A549 (cell line): ENCODE measurements at regions of chr16 and their contacts with region 1.

Region 1: DNA sequence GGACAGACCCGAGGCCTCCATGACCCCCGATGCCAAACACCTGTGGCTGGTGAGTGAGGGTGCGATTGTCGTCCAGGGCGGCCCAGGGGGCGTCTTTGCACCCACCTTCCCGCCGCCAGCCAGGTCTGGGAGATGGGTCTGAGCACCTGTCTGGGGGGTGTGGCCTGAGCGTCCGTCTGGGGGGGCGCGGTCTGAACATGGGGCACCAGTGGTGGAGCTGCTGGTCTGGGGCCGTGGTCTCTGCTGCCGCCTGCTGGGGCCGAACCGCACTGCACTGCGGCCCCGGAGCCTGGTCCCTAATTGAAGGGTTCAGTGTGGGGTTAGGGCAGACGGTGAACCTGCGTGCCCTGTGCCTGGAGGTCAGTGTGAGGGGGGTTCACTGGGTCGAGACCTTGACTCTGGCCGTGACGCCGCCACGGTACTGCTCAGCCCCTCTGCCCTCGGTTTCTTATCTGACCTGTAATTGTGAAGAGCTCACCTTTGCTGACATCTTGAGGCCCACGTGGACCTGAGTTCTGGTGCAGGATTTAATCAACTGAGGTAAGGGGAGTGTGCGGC is 12.6 kb upstream of the TCF25 start:
- DNase-seq: peak; percentile 58 to 91
- ATAC-seq: peak; percentile 93 to 96
- H3K4me3 ChIP-seq: no peak overlapping the region
- H3K27ac ChIP-seq: no peak overlapping the region
- H3K4me1 ChIP-seq: peaks cover 4% of the 10 kb centered on the region; the same call in 1 of the 3 replicates
- CTCF ChIP-seq: peak; percentile 88
- EP300 ChIP-seq: no peak
- POLR2A ChIP-seq: no peak
- RAD21 ChIP-seq: peak; percentile 93

Region 2: GRCh38 chr16:89560378-89561141 is 300.3 kb before region 1 on chr16 and contains the start of gene RPL13:
- CTCF ChIA-PET with region 1: no interaction called
- POLR2A ChIA-PET with region 1: no interaction called
- DNase-seq: peak; percentile 94 to 96
- ATAC-seq: peak; percentile 79 to 87
- H3K4me3 ChIP-seq: peak within 1 kb of the TSS; percentile 99
- H3K27ac ChIP-seq: peak within 1 kb of the TSS; percentile 96 to 99
- H3K4me1 ChIP-seq: peaks cover 52% of the 10 kb centered on the region
- CTCF ChIP-seq: no peak
- EP300 ChIP-seq: no peak
- POLR2A ChIP-seq: peak; percentile 93
- RAD21 ChIP-seq: no peak
- polyA plus RNA-seq, gene RPL13: 2,291 and 2,911 TPM in 2 replicates

Region 3: GRCh38 chr16:89741342-89742014 is 119.3 kb before region 1 on chr16:
- CTCF ChIA-PET with region 1: interaction called, 26 read pairs
- POLR2A ChIA-PET with region 1: no interaction called
- DNase-seq: no peak
- ATAC-seq: peak; percentile 5 to 10; a peak in 3 of 6 replicates
- H3K4me3 ChIP-seq: no peak overlapping the region
- H3K27ac ChIP-seq: no peak overlapping the region
- H3K4me1 ChIP-seq: no peaks in the 10 kb centered on the region
- CTCF ChIP-seq: no peak
- EP300 ChIP-seq: no peak
- POLR2A ChIP-seq: no peak
- RAD21 ChIP-seq: no peak

Region 4: GRCh38 chr16:89791278-89791995 is 69.4 kb before region 1 on chr16:
- CTCF ChIA-PET with region 1: interaction called, 62 read pairs
- POLR2A ChIA-PET with region 1: no interaction called
- DNase-seq: no peak
- ATAC-seq: no peak
- H3K4me3 ChIP-seq: no peak overlapping the region
- H3K27ac ChIP-seq: no peak overlapping the region
- H3K4me1 ChIP-seq: no peaks in the 10 kb centered on the region
- CTCF ChIP-seq: no peak
- EP300 ChIP-seq: no peak
- POLR2A ChIP-seq: no peak
- RAD21 ChIP-seq: no peak

Region 5: GRCh38 chr16:89822188-89823086 is 38.4 kb before region 1 on chr16:
- CTCF ChIA-PET with region 1: interaction called, 15 read pairs
- POLR2A ChIA-PET with region 1: no interaction called
- DNase-seq: no peak
- ATAC-seq: peak; percentile 45 to 52; a peak in 5 of 6 replicates
- H3K4me3 ChIP-seq: no peak overlapping the region
- H3K27ac ChIP-seq: no peak overlapping the region
- H3K4me1 ChIP-seq: peaks cover 6% of the 10 kb centered on the region
- CTCF ChIP-seq: no peak
- EP300 ChIP-seq: no peak
- POLR2A ChIP-seq: no peak
- RAD21 ChIP-seq: no peak

Region 6: DNA sequence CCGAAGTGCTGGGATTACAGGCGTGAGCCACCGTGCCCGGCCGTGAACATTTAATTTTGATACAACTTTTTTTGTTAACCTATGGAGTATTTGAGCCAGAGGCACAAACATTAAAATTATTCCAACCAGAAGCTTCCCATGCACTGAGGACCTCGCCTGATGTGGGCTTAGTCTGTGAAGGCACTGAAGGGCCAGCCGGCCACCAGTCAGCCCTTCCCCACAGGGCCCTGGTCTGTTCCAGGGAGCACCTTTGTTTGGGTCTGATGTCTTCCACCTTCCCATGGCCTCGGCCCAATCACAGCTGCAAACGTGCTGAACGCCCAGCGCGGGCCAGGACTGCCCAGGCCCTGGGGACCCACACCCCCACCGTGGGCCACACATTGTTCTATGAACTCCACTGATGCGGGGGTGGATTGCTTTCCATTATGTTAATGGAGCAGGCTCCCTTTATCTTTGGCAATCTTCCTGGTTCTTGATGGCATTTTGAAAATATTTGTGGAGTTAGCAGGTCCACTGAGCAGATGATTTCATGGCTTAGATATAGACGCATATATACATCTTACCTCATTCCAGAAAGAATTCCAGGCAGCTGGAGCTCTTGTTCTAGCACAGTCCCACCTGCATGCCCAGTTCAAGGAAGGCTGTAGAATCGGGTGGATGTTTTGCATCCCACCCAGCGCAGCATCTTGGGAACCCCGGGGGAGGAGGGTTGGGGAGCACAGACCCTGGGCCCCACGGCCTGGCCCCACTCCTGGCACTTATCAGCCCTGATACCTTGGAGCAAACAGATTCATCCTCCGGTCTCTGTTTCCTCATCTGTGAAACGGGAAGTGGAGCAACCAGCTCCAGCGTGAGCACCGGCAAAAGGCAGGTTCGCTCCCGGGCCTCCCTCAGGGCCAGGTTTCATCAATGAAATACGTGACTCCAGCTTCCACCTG is 18.1 kb before region 1 on chr16:
- CTCF ChIA-PET with region 1: interaction called, 31 read pairs
- POLR2A ChIA-PET with region 1: no interaction called
- DNase-seq: no peak
- ATAC-seq: peak in 1 of 2 experiments; percentile 11; a peak in 1 of 6 replicates
- H3K4me3 ChIP-seq: no peak overlapping the region
- H3K27ac ChIP-seq: no peak overlapping the region
- H3K4me1 ChIP-seq: peaks cover 8% of the 10 kb centered on the region
- CTCF ChIP-seq: no peak
- EP300 ChIP-seq: no peak
- POLR2A ChIP-seq: no peak
- RAD21 ChIP-seq: no peak

Region 7: GRCh38 chr16:89893642-89894509 is 33.0 kb after region 1 on chr16:
- CTCF ChIA-PET with region 1: interaction called, 10 read pairs
- POLR2A ChIA-PET with region 1: no interaction called
- DNase-seq: no peak
- ATAC-seq: peak; percentile 13 to 20; a peak in 4 of 6 replicates
- H3K4me3 ChIP-seq: no peak overlapping the region
- H3K27ac ChIP-seq: no peak overlapping the region
- H3K4me1 ChIP-seq: no peaks in the 10 kb centered on the region
- CTCF ChIP-seq: no peak
- EP300 ChIP-seq: no peak
- POLR2A ChIP-seq: no peak
- RAD21 ChIP-seq: no peak

Region 8: DNA sequence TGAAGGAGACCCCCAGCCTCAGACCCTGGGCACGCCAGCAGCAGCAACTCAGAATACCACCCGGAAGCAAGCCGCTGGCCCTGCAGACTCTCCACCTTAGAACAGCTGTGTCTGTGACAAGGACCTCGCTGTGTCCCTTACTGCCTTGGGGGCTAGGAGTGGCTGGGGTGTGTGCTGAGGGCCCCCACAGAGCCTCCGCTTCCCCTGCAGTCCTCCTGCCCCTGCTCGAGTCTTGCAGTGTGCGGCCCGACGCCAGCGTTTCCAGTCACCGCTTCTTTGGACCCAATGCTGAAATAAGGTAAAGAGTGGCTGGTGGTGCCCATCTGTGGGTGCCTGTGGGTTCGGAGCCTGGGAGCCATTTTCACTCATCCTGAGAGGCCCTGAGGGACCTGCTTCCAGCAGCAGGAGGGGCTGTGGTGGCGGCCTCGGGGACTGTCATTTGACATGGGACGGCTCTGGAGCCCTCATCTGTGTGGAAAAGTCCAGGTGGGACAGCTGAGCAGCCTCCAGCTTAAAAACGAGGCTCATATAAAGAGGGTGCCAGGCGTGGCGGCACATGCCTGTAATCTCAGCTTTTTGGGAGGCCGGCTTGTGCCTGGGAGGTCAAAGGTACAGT is 43.2 kb after region 1 on chr16:
- CTCF ChIA-PET with region 1: no interaction called
- POLR2A ChIA-PET with region 1: no interaction called
- DNase-seq: no peak
- ATAC-seq: no peak; a peak in 2 of 6 replicates
- H3K4me3 ChIP-seq: no peak overlapping the region
- H3K27ac ChIP-seq: no peak overlapping the region
- H3K4me1 ChIP-seq: no peaks in the 10 kb centered on the region
- CTCF ChIP-seq: no peak
- EP300 ChIP-seq: no peak
- POLR2A ChIP-seq: no peak
- RAD21 ChIP-seq: no peak